ENCODE measurements at regions of chr7 and their contacts with region 1.

Region 1: DNA sequence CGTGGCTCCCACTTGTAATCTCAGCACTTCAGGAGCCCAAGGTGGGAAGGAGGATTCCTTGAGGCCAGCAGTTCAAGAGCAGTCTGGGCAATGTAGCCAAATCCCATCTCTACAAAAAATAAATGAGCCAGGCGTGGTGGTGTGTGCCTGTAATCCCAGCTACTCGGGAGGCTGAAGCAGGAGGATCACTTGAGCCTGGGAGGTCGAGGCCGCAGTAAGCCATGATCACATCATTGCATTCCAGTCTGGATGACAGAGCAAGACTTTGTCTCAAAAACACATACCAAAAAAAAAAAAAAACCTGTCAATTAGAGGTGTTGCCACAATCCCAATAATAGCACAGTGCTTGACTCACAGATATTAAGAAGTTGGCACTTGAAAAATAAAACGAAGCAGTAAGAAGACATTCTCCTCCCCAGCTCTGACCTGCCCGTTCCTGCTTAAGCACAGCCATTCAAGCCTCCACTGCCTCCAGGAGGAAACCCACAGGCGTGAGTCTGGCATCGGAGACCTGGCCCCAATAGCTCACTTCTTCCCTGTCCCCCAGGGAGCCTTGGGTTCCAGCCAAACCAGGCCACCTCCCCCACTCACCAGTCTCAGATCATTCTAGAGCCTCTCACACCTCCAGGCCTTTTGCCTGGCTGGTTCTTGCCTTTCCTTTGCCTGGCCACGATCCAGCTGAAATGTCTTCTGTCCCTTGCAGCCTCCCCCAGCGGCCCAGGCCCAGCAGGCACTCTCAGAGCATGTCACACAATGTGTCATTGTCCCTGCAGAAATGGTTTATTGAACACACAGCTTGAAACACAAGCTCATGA is 45.3 kb upstream of the GTF2I start:
- DNase-seq: no peak
- H3K4me3 ChIP-seq: no peak overlapping the region
- H3K27ac ChIP-seq: peak overlapping the region; percentile 80 to 84 (median 81)
- H3K4me1 ChIP-seq: peaks cover 6 to 37% (median 23%) of the 10 kb centered on the region in 4 donors
- H3K27me3 ChIP-seq: no peaks in the 10 kb centered on the region
- CTCF ChIP-seq: no peak
- EP300 ChIP-seq: no peak
- POLR2A ChIP-seq: no peak

Region 2: GRCh38 chr7:74502181-74502891 is 109.9 kb before region 1 on chr7:
- intact Hi-C with region 1: no loop called
- DNase-seq: no peak
- H3K4me3 ChIP-seq: no peak overlapping the region
- H3K27ac ChIP-seq: peak overlapping the region in 3 of 4 donors; percentile 52 to 68 (median 58)
- H3K4me1 ChIP-seq: peaks cover 9 to 47% (median 36%) of the 10 kb centered on the region in 4 donors
- H3K27me3 ChIP-seq: no peaks in the 10 kb centered on the region
- CTCF ChIP-seq: no peak
- EP300 ChIP-seq: no peak
- POLR2A ChIP-seq: no peak

Region 3: DNA sequence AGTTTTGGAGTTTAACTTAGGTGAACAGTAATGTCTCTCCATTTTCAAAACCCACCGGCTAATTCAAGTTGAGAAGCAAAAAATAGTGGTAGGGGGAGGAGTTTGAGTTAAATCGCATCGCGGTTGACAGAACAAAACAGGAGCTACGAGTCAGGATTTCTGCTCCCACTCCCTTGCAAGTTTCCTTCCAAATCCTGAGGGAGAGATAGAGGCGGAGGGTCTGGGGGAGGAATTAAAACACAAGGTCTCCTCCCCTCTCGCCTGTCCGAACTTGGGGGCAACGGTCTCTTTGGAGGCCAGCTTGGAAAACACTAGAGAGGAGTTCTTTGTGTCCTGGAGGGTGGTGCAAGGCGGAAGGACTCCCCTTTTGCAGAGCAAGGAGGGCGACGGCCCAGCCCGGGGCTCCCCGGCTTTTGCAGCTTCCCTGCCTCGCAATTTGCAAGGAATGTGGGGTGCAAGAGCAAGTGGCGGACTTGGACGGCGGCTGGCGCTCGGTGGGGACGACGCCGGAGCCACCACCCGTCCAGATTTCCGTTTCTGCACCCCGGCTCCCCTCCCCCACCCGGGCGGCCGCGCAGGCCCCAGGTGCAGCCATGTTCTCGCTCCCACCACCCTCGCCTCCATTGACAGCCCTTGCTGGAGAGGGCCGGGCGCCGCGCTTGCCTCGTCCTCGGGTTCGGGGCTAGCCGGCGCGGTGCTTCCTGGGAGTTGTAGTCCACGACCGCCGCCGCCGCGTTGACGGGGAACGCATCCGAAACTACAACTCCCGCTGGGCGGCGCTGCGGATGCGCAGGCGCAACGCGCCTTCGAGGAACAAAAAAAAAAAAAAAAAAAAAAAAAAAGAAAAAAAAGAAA is 44.8 kb after region 1 on chr7:
- intact Hi-C with region 1: loop called (anchors 5 kb)
- DNase-seq: peak; percentile 99
- H3K4me3 ChIP-seq: peak overlapping the region; percentile 91 to 100 (median 100)
- H3K27ac ChIP-seq: peak overlapping the region; percentile 98 to 100 (median 100)
- H3K4me1 ChIP-seq: peaks cover 35 to 54% (median 51%) of the 10 kb centered on the region in 4 donors
- H3K27me3 ChIP-seq: no peaks in the 10 kb centered on the region
- CTCF ChIP-seq: peak in 2 of 3 experiments; percentile 16 to 24
- EP300 ChIP-seq: no peak
- POLR2A ChIP-seq: no peak

Region 4: DNA sequence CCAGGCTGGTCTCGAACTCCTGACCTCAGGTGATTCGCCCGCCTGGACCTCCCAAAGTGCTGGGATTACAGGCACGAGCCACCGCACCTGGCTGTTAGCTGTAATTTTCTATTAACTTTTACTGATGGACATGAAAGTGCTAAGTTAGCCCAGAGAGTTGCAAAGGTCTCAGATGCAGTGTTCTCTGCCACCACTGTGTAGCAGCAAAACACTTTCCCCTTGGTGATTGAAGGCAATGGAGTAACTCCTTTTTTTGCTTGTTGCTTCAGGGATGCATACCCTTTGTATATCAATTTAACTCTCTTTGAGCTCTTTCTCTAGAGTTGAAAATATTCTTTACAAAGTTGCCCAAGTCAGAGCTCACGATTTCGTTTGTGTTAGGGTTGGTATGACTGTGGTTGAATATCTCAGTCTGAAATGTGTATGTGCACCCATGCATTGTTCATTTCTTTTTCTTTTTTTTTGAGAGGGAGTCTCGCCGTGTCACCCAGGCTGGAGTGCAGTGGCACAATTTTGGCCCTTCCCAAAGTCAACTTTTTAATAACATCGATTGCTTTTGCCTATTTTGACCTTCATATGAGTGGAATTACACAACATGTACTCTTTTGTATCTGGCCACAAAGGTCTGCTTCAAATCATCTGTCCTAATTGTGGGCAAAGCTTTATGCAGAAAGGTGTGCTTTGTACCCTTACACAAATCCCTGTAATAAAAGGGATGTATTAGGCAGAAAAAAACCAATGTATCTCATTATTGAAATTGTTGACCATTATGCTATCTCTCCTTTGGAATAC is 97.9 kb after region 1 on chr7:
- intact Hi-C with region 1: loop called (anchors 10 kb)
- DNase-seq: no peak
- H3K4me3 ChIP-seq: no peak overlapping the region
- H3K27ac ChIP-seq: no peak overlapping the region
- H3K4me1 ChIP-seq: peaks cover 0 to 10% (median 0%) of the 10 kb centered on the region in 4 donors
- H3K27me3 ChIP-seq: no peaks in the 10 kb centered on the region
- CTCF ChIP-seq: peak in 2 of 3 experiments; percentile 7 to 35
- EP300 ChIP-seq: no peak
- POLR2A ChIP-seq: no peak

Measured in esophagus muscularis mucosa (tissue), 4 donors.